Astrocyte of the spinal cord (primary cell): ENCODE measurements at regions of chr1 and their contacts with region 1.

Region 1: DNA sequence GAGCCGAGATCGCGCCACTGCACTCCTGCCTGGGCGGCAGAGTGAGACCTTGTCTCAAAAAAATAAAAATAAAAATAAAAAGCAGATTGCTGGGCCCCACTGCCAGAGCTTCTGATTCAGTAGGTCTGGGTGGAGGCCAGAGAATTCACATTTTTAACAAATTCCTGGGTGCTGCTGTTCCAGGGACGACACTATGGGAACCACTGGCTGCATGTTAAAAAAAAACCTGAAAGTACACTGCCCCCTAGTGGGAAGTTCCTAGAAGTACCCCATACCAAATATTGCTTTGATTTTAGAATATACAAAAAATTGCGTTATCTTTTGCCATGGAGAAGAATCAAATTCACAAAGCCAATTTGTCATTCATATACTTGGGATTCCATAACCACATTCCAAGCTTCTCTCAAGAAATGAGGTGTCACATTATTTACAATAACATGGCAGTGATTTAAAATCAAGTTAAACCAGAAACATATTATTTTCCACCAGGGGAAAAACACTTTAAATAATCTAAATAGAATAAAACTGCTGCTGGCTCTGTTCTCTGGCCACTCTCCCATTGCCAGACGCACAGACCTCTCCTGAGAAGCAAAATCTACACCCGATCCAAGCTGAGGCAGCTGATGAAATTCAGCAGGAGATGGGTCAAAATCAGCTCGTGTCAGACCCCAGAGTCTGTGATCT is 27.4 kb downstream of the SYF2 start:
- DNase-seq: peak; percentile 49
- H3K4me3 ChIP-seq: no peak overlapping the region
- CTCF ChIP-seq: peak; percentile 71

Region 2: GRCh38 chr1:24930204-24931145 is 274.5 kb before region 1 on chr1 and contains the start of gene RUNX3:
- in situ Hi-C with region 1: loop called (anchors 25 kb)
- DNase-seq: no peak
- H3K4me3 ChIP-seq: peak within 1 kb of the TSS; percentile 5
- CTCF ChIP-seq: no peak